Naive thymus-derived CD4-positive, alpha-beta T cell (primary cell): ENCODE measurements at regions of chr13 and their contacts with region 1.

Region 1: DNA sequence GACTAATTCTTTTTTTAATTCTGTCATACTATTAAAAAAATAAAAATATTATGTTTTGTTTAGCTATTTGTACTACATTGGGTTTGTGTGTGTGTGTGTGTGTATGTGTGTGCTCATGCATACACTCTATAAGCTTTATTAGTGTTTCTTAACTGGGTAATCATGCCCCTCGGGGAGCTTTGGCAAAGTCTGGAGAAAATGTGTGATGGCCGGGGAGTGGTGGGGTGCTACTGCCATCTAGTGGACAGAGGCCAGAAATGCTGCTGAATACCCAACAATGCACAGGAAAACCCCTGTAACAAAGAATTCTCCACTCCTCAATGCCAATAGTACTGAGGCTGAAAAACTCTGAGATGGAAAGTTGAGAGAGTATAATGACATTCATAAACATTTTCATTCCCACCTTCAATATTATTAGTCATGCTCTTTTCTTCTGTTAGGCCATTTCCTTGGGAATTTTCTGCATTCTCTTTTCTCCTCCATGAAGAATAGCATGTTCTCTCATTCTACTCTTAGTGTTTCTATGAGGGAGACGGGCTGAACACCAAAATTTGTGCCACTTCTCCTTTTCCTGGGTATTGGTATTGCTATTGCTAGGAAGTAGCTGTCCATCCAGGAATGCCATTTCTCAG is 157.3 kb downstream of the DNAJC3 start:
- DNase-seq: peak; percentile 31 to 71 (median 58)
- ATAC-seq: peak; percentile 90
- H3K4me3 ChIP-seq: no peak overlapping the region
- H3K4me3 Mint-ChIP-seq: no peak overlapping the region
- H3K27ac ChIP-seq: no peak overlapping the region
- H3K27ac Mint-ChIP-seq: no peak overlapping the region
- H3K4me1 ChIP-seq: no peaks in the 10 kb centered on the region
- H3K4me1 Mint-ChIP-seq: peaks cover 0 to 2% (median 0%) of the 10 kb centered on the region in 7 donors
- H3K27me3 ChIP-seq: no peaks in the 10 kb centered on the region
- H3K27me3 Mint-ChIP-seq: peaks cover 18 to 36% (median 20%) of the 10 kb centered on the region in 5 donors

Region 2: DNA sequence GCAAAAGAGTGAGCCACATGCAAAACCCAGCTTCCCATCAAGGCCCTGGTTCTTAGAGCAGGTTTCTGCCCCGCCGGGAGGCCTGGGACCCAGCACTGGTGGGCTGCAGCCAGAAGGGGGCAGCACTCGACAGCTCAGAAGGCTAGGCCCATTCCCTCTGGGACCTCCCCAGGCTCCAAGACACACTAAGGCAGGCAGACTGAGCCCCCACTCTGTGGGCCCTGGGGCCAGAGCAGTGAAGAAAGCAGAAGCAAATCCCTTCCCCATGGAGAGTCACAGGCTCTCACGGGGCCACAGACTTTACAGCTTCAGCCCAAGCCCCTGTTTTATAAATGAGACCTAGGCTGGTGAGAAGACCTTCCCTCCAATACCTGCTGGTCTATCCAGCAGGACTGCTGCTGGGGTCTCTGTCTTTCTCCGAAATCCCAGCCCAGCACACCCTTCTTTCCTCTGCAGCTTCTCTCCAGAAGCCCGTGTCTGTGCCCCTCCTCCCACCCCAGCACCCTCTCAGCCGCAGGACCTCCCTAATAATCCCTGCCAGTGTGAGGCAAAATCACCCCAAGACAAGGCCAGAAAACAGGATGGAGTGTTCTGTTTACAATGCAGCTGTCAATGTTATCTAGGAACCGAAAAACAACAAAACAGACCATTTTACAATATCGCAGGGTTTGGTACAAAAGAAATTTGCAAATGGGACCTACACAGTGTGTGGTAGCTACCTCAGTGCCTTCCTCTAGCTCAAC is 642.3 kb before region 1 on chr13:
- CTCF ChIA-PET with region 1: no interaction called
- POLR2A ChIA-PET with region 1: no interaction called
- intact Hi-C with region 1: loop called (anchors 2 kb)
- DNase-seq: peak in 8 of 9 donors; percentile 12 to 67 (median 36)
- ATAC-seq: peak; percentile 73
- H3K4me3 ChIP-seq: no peak overlapping the region
- H3K4me3 Mint-ChIP-seq: no peak overlapping the region
- H3K27ac ChIP-seq: no peak overlapping the region
- H3K27ac Mint-ChIP-seq: peak overlapping the region in 3 of 9 donors; percentile 20 to 69 (median 32)
- H3K4me1 ChIP-seq: peaks cover 0 to 2% of the 10 kb centered on the region in 2 donors
- H3K4me1 Mint-ChIP-seq: peaks cover 2 to 21% (median 19%) of the 10 kb centered on the region in 7 donors
- H3K27me3 ChIP-seq: no peaks in the 10 kb centered on the region
- H3K27me3 Mint-ChIP-seq: no peaks in the 10 kb centered on the region

Region 3: GRCh38 chr13:95494082-95494681 is 340.1 kb before region 1 on chr13:
- CTCF ChIA-PET with region 1: interaction called, 3 read pairs
- POLR2A ChIA-PET with region 1: no interaction called
- intact Hi-C with region 1: loop called in 1 of 2 experiments (anchors 1 kb)
- DNase-seq: peak in 5 of 9 donors; percentile 23 to 35 (median 27)
- ATAC-seq: no peak
- H3K4me3 ChIP-seq: no peak overlapping the region
- H3K4me3 Mint-ChIP-seq: no peak overlapping the region
- H3K27ac ChIP-seq: no peak overlapping the region
- H3K27ac Mint-ChIP-seq: no peak overlapping the region
- H3K4me1 ChIP-seq: no peaks in the 10 kb centered on the region
- H3K4me1 Mint-ChIP-seq: peaks cover 0 to 4% (median 0%) of the 10 kb centered on the region in 7 donors
- H3K27me3 ChIP-seq: no peaks in the 10 kb centered on the region
- H3K27me3 Mint-ChIP-seq: peaks cover 6 to 23% (median 17%) of the 10 kb centered on the region in 5 donors

Region 4: GRCh38 chr13:95624020-95624419 is 210.2 kb before region 1 on chr13:
- CTCF ChIA-PET with region 1: interaction called, 67 read pairs
- POLR2A ChIA-PET with region 1: no interaction called
- intact Hi-C with region 1: loop called (anchors 1 kb)
- DNase-seq: peak in 5 of 9 donors; percentile 18 to 42 (median 29)
- ATAC-seq: peak; percentile 56
- H3K4me3 ChIP-seq: no peak overlapping the region
- H3K4me3 Mint-ChIP-seq: no peak overlapping the region
- H3K27ac ChIP-seq: no peak overlapping the region
- H3K27ac Mint-ChIP-seq: no peak overlapping the region
- H3K4me1 ChIP-seq: no peaks in the 10 kb centered on the region
- H3K4me1 Mint-ChIP-seq: peaks cover 0 to 3% (median 0%) of the 10 kb centered on the region in 7 donors
- H3K27me3 ChIP-seq: no peaks in the 10 kb centered on the region
- H3K27me3 Mint-ChIP-seq: peaks cover 15 to 32% (median 20%) of the 10 kb centered on the region in 5 donors